ENCODE measurements at regions of chr16 and their contacts with region 1.

Region 1: GRCh38 chr16:35391328-35391727 is 1931.9 kb downstream of the TP53TG3F start:
- DNase-seq: no peak
- ATAC-seq: peak in 1 of 2 donors; percentile 51
- H3K4me3 ChIP-seq: no peak overlapping the region
- H3K27ac ChIP-seq: no peak overlapping the region
- H3K4me1 ChIP-seq: no peaks in the 10 kb centered on the region
- H3K27me3 ChIP-seq: no peaks in the 10 kb centered on the region
- CTCF ChIP-seq: peak in 3 of 5 experiments; percentile 17 to 56 (median 28)
- POLR2A ChIP-seq: no peak

Region 2: DNA sequence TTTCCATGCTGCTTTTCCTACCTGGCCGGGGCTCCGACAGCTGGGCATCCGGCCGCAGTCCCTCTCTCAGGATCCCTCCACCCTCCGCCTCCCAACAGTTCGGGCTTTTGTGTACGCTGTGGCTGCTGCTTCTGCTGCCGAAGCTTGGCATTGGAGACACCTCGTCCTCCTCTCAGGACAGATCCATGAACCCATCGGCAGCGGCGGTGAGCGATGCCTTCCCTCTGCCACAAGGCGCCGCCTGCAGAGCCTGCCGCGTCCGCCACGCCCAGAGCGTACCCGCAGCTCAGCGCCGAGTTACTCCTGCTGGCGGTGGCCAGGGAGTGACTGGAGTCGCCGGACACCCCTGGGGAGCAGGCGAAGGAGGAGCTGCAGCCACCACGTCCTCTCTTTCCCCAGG is 100.9 kb after region 1 on chr16:
- in situ Hi-C with region 1: loop called in 1 of 4 experiments (anchors 25 kb)
- intact Hi-C with region 1: no loop called
- DNase-seq: no peak
- ATAC-seq: no peak
- H3K4me3 ChIP-seq: no peak overlapping the region
- H3K27ac ChIP-seq: no peak overlapping the region
- H3K4me1 ChIP-seq: no peaks in the 10 kb centered on the region
- H3K27me3 ChIP-seq: no peaks in the 10 kb centered on the region
- CTCF ChIP-seq: no peak
- POLR2A ChIP-seq: no peak

Measured in gastrocnemius medialis (tissue), 4 donors.